K562 (cell line): ENCODE measurements at regions of chr16 and their contacts with region 1.

Region 1: DNA sequence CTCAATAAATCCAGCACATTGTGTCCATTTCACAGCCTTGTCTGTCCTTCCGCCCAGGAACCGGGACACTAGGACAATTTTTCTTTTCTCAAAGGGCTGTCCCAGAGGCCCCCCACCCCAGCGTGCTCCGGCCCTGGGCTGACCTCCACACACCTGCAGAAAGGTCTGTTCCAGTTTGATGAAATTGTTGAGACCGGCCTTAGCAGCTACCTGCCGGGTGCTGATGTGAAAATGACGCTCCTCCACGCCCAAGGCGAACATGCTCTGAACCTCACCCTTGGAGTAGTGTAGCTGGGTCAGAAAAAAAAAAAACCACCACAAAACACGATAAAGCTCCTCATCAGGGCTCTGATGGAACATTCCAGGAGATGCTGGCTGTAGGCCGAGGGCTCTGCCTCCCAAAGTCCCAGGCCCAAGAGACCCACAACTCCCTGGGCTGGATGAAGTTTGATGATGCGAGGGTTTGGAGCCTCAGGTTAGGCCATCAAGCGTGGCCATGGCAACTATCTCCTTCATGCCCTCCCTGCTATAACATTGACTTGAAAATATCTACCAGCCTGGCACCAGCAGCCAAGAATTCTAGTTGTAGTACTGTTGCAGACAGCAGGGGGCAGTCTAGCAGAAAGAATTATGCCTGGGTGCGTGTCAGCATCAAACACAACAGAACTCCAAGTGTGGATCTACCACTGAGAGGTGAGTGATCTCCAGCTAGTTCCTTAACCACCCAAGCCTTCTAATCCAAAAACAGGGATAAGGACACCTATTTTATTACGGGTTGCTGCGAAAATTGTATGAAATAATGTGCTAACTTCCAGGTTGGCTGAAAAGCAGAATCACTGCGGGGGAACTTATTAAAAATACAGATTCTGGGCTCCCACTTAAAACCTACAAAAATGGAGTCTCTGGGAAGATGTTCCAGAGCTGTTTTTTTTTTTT is 62.1 kb downstream of the RMI2 start:
- DNase-seq: peak; percentile 70 to 76 (median 75)
- ATAC-seq: peak; percentile 82
- H3K4me3 ChIP-seq: no peak overlapping the region
- H3K27ac ChIP-seq: no peak overlapping the region
- H3K4me1 ChIP-seq: peaks cover 0 to 15% of the 10 kb centered on the region in 2 experiments; a peak in 2 of 5 replicates
- H3K27me3 ChIP-seq: peaks cover 3 to 28% of the 10 kb centered on the region in 2 experiments; a peak in 4 of 5 replicates
- CTCF ChIP-seq: peak; percentile 74 to 85 (median 82)
- EP300 ChIP-seq: no peak
- POLR2A ChIP-seq: no peak
- RAD21 ChIP-seq: peak; percentile 65 to 89

Region 2: GRCh38 chr16:10964039-10964890 is 443.1 kb before region 1 on chr16:
- CTCF ChIA-PET with region 1: interaction called, 7 read pairs
- POLR2A ChIA-PET with region 1: no interaction called
- in situ Hi-C with region 1: no loop called
- intact Hi-C with region 1: loop called (anchors 2 kb)
- DNase-seq: peak; percentile 78 to 88 (median 78)
- ATAC-seq: peak; percentile 96
- H3K4me3 ChIP-seq: no peak overlapping the region
- H3K27ac ChIP-seq: no peak overlapping the region
- H3K4me1 ChIP-seq: peaks cover 16 to 18% of the 10 kb centered on the region in 2 experiments; a peak in 4 of 5 replicates
- H3K27me3 ChIP-seq: no peaks in the 10 kb centered on the region
- CTCF ChIP-seq: peak; percentile 91 to 97 (median 96)
- EP300 ChIP-seq: no peak
- POLR2A ChIP-seq: no peak
- RAD21 ChIP-seq: peak; percentile 87 to 92

Region 3: DNA sequence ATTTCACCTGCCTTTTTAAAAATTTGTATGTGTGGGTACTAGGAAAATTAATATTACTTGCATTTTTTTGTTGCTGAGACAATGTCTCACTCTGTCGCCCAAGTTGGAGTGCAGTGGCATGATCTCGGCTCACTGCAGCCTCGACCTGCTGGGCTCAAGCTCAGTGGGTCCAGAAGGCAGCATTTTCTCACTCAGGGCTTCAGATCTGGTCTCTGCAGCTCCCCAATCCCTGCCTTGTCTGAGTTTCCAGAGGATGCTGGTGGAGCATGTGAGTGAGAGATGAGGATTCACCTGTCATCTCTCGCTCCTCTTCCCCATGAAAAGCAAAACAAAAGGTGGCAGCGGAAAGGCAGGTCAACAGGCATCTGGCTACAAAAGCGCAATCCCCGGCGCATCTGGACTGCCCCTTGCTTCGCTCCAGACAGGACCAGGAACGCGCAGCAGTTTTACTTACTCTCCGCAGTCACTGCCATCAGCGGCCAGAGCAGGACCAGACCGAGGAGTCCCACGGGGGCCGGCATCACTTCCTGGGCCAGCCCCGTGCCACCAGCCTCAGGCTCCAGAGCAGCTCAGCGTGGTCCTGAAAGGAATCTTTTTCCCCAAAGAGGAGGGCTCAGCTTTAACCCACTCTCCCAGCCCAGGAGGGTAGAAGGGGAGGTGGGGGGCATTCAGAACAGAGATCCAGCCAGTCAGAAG is 119.5 kb after region 1 on chr16:
- CTCF ChIA-PET with region 1: no interaction called
- POLR2A ChIA-PET with region 1: no interaction called
- in situ Hi-C with region 1: no loop called
- intact Hi-C with region 1: loop called (anchors 10 kb)
- DNase-seq: no peak
- ATAC-seq: no peak
- H3K4me3 ChIP-seq: no peak overlapping the region
- H3K27ac ChIP-seq: no peak overlapping the region
- H3K4me1 ChIP-seq: no peaks in the 10 kb centered on the region
- H3K27me3 ChIP-seq: peaks cover 16 to 50% of the 10 kb centered on the region in 2 experiments
- CTCF ChIP-seq: no peak
- EP300 ChIP-seq: no peak
- POLR2A ChIP-seq: no peak
- RAD21 ChIP-seq: no peak

Region 4: DNA sequence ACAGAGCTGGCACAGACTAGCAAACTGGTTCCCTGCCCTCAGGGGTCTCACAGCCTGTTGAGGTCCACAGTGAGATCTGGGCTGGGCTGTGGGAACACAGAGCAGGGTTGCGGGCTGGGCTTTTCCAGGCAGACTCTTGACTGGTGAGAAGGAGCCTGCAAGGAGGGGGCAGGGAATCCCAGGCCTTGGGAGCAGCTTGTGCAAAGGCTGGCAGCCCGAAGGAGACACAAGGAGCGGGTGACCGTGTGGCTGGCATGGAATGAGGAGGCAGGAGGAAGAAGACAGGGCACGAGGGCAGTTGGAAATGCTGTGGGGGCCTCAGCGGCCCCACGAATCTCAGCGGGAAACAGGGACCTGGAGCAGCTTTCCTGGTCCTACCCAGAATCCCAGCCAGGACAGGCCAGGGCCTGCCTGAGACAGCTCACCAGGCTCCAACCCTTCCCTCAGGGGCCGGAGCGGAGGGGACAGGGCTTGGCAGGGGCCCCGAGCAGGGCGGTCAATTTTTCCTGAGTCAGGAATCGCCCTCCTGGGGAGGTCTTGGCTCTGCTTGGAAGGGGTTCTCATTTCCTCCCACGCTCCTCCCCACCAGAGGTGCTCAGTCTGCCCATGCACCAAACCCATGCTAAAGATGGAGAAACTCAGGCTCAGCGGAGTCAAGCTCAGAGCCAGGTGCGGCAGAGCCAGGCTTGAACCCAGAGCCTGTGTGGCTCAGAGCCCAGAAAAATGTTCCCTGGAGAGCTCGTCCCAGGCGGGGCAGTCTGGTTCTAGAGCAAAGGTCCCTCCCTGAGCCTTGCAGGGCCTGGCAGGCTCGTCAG is 251.8 kb after region 1 on chr16:
- CTCF ChIA-PET with region 1: interaction called, 5 read pairs
- POLR2A ChIA-PET with region 1: no interaction called
- in situ Hi-C with region 1: loop called (anchors 10 kb)
- intact Hi-C with region 1: loop called (anchors 5 kb)
- DNase-seq: no peak
- ATAC-seq: no peak
- H3K4me3 ChIP-seq: no peak overlapping the region
- H3K27ac ChIP-seq: no peak overlapping the region
- H3K4me1 ChIP-seq: peaks cover 0 to 4% of the 10 kb centered on the region in 2 experiments; a peak in 1 of 5 replicates
- H3K27me3 ChIP-seq: peaks cover 30 to 60% of the 10 kb centered on the region in 2 experiments
- CTCF ChIP-seq: no peak
- EP300 ChIP-seq: no peak
- POLR2A ChIP-seq: no peak
- RAD21 ChIP-seq: no peak

Region 5: DNA sequence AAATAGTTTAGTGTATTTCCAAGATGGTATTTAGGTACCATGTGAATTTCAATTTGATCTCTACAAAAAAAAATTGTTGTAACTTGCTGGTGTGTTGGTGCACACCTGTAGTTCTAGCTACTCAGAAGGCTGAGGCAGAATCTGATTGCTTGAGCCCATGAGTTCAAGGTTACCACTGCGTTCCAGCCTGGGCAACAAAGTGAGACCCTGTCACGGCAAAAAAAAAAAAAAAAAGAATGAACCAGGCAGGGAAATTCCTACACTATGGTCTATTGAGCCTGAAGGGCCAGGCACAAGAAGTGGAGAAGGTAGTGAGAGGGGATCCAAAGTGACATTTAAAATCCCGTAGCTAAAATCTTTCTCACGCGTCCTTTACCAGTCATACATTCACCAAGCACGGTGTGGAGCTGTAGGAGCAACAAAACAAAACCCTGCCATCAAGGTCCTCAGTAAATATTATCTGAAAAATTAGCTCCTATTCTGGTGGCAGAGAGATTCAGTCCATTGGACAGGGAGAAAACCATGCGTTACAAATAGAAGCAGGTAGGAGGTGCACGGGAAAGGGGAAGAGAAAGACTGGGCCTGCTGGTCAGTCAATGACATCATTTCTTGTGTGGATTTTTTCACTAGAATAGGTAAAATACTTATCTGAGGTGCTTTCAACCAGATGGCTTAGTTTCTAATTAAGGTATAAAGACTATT is 308.1 kb after region 1 on chr16:
- CTCF ChIA-PET with region 1: interaction called, 5 read pairs
- POLR2A ChIA-PET with region 1: no interaction called
- in situ Hi-C with region 1: no loop called
- intact Hi-C with region 1: loop called (anchors 2 kb)
- DNase-seq: no peak
- ATAC-seq: no peak
- H3K4me3 ChIP-seq: no peak overlapping the region
- H3K27ac ChIP-seq: no peak overlapping the region
- H3K4me1 ChIP-seq: no peaks in the 10 kb centered on the region
- H3K27me3 ChIP-seq: no peaks in the 10 kb centered on the region
- CTCF ChIP-seq: no peak
- EP300 ChIP-seq: no peak
- POLR2A ChIP-seq: no peak
- RAD21 ChIP-seq: no peak

Region 6: DNA sequence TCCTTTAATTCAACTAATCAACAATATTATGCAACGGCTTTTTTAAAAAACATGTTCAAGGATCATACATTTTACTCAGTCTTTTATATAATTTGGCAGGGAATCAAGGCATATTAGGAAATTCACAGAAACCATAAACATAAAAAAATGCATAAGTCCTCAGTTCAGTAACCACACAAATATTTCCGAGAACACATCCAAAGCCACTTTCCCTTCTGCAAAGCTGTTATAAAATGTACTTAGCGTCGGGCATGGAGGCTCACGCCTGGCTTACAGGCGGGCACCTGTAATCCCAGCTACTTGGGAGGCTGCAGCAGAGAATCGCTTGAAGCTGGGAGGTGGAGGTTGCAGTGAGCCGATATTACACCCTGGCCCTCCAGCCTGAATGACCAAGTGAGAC is 399.4 kb after region 1 on chr16:
- CTCF ChIA-PET with region 1: no interaction called
- POLR2A ChIA-PET with region 1: no interaction called
- in situ Hi-C with region 1: loop called (anchors 5 kb)
- intact Hi-C with region 1: loop called (anchors 5 kb)
- DNase-seq: no peak
- ATAC-seq: no peak
- H3K4me3 ChIP-seq: no peak overlapping the region
- H3K27ac ChIP-seq: no peak overlapping the region
- H3K4me1 ChIP-seq: peaks cover under 1 to 3% of the 10 kb centered on the region in 2 experiments; a peak in 3 of 5 replicates
- H3K27me3 ChIP-seq: no peaks in the 10 kb centered on the region; a peak in 1 of 5 replicates
- CTCF ChIP-seq: no peak
- EP300 ChIP-seq: no peak
- POLR2A ChIP-seq: no peak
- RAD21 ChIP-seq: no peak